ENCODE measurements at regions of chr9 and their contacts with region 1.

Region 1: GRCh38 chr9:93682232-93682968 is 106.0 kb downstream of the PHF2 start:
- DNase-seq: peak; percentile 48 to 59
- ATAC-seq: peak in 7 of 8 donors; percentile 31 to 68 (median 60)
- H3K4me3 ChIP-seq: no peak overlapping the region
- H3K27ac ChIP-seq: no peak overlapping the region
- H3K4me1 ChIP-seq: no peaks in the 10 kb centered on the region
- H3K27me3 ChIP-seq: no peaks in the 10 kb centered on the region
- CTCF ChIP-seq: peak; percentile 61 to 85 (median 78)

Region 2: GRCh38 chr9:93612796-93613154 is 69.6 kb before region 1 on chr9:
- intact Hi-C with region 1: no loop called
- DNase-seq: no peak
- ATAC-seq: peak in 4 of 8 donors; percentile 11 to 58 (median 28)
- H3K4me3 ChIP-seq: no peak overlapping the region
- H3K27ac ChIP-seq: no peak overlapping the region
- H3K4me1 ChIP-seq: peaks cover 3 to 41% (median 22%) of the 10 kb centered on the region in 9 donors
- H3K27me3 ChIP-seq: no peaks in the 10 kb centered on the region
- CTCF ChIP-seq: no peak

Region 3: DNA sequence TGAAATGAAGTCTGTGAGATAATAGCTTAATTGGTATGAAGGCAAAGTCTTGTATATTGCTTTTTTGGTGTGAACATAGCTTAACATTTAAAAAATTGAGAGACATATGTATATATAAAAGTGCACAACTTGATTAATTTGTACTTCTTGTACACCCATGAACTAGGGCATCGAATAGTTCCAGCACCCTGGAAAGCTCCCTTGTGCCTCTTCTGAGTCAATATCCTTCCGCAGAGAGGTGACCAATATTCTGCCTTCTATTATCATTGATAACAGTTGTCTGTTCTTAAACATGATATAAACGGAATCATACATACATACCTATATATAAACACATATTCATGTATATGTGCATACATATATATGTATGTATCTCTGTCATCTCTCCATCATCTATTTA is 79.4 kb after region 1 on chr9:
- intact Hi-C with region 1: loop called in 1 of 10 experiments (anchors 2 kb)
- DNase-seq: no peak
- ATAC-seq: no peak
- H3K4me3 ChIP-seq: no peak overlapping the region
- H3K27ac ChIP-seq: no peak overlapping the region
- H3K4me1 ChIP-seq: no peaks in the 10 kb centered on the region
- H3K27me3 ChIP-seq: peaks cover 0 to 14% (median 3%) of the 10 kb centered on the region in 7 donors
- CTCF ChIP-seq: no peak

Region 4: DNA sequence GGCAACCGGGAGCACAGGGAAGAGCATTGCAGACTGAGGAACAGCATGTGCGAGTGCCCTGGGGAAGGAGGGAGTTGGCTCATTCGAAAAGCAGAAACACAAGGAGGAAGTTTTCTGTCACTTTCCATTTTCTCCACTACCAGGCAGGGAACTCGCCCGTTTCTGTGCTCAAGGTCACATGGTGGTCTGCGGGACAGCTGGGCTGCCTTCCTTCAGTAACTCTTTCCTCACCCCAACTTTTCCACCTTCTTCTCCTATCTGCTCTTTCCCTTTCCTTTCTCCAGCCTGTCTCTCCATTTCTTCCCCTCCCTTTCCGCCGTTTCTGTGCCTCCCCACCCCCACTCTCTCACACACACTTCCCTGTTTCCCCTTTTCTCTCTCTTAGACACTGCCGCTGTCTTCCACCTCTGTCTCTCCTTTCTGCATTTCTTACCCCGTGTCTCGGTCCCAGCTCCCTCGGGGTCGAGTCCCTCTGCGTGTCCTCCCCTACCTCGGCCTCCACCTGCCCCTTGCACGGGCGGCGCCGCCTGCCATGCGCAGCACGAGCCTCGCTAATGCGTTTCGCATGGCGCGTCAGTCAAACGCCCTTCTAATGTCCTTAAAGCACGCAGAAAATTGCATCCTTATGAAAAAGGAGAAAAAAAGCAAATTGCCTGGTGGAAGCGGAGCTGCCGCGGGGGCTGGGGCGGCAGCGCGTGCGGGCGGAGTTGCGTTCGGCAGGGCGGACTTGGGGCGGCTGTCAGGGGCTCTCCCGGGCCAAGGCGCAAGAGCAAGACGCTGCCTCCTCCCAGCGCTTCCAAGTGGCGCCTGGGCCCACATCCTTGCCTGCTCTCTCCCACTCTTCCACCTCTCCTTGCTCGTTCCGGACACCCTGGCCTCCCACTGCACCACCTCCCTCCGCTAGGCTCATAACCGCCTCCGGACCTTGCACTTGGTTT is 263.3 kb after region 1 on chr9:
- intact Hi-C with region 1: loop called in 1 of 10 experiments (anchors 5 kb)
- DNase-seq: no peak
- ATAC-seq: peak in 2 of 8 donors; percentile 31 to 33
- H3K4me3 ChIP-seq: peak overlapping the region; percentile 0 to 44 (median 36)
- H3K27ac ChIP-seq: no peak overlapping the region
- H3K4me1 ChIP-seq: peaks cover 2 to 27% (median 13%) of the 10 kb centered on the region in 9 donors
- H3K27me3 ChIP-seq: peaks cover 42 to 100% (median 98%) of the 10 kb centered on the region in 7 donors
- CTCF ChIP-seq: no peak

Region 5: GRCh38 chr9:93962561-93963440 is 280.4 kb after region 1 on chr9:
- intact Hi-C with region 1: loop called (anchors 1 to 5 kb)
- DNase-seq: peak; percentile 66 to 85
- ATAC-seq: peak; percentile 71 to 90 (median 82)
- H3K4me3 ChIP-seq: no peak overlapping the region
- H3K27ac ChIP-seq: no peak overlapping the region
- H3K4me1 ChIP-seq: peaks cover 16 to 36% (median 31%) of the 10 kb centered on the region in 9 donors
- H3K27me3 ChIP-seq: peaks cover 33 to 78% (median 71%) of the 10 kb centered on the region in 7 donors
- CTCF ChIP-seq: peak; percentile 82 to 90 (median 87)

Region 6: DNA sequence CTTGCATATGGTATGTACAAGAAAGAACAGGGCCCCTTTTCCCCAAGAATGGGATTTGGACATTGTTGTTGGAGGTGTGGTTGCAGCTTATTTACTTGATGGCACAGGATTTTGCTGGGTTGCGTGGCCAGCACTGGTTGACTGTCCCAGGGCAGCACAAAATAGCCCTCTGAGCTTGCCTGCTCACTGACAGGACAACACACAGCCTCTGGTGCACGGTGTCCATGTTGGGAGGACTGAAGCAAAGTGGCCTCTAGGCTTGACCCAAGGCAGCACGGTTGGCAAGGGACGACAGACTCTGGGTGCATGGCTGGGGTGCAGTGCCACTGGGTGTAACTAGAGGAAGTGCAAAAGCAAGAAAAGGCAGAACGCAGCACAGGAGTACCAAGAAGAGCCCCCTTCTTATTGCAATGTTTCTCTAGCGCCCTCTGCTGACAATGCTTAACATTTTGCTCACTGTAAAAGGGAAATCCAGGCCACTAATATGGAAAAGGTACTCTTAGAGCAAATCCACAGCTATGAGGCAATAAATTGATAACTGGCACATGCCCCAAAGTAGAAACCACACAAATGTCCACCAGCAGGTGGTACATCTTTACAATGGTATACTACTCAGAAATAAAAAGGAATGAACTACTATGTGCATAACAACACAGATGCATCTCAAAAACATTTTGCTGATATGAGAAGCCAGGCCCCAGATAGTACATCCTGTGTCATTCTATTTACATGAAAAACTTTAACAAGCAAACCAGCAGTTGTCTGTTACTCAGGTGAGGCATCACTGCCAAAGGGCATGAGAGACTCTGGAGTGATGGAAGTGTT is 320.1 kb after region 1 on chr9:
- intact Hi-C with region 1: loop called in 4 of 10 experiments (anchors 2 to 10 kb)
- DNase-seq: no peak
- ATAC-seq: peak in 1 of 8 donors; percentile 37
- H3K4me3 ChIP-seq: no peak overlapping the region
- H3K27ac ChIP-seq: no peak overlapping the region
- H3K4me1 ChIP-seq: no peaks in the 10 kb centered on the region
- H3K27me3 ChIP-seq: peaks cover 0 to 16% (median 6%) of the 10 kb centered on the region in 7 donors
- CTCF ChIP-seq: peak; percentile 11 to 67 (median 54)